ENCODE measurements at regions of chr16 and their contacts with region 1.

Region 1: GRCh38 chr16:11255737-11256660 is at the start of gene SOCS1:
- DNase-seq: peak; percentile 77 to 88 (median 88)
- H3K4me3 ChIP-seq: peak within 1 kb of the TSS; percentile 68 to 92 (median 85)
- H3K27ac ChIP-seq: peak within 1 kb of the TSS; percentile 68 to 82
- H3K4me1 ChIP-seq: peaks cover 5 to 62% (median 53%) of the 10 kb centered on the region in 4 experiments
- H3K27me3 ChIP-seq: no peaks in the 10 kb centered on the region

Region 2: DNA sequence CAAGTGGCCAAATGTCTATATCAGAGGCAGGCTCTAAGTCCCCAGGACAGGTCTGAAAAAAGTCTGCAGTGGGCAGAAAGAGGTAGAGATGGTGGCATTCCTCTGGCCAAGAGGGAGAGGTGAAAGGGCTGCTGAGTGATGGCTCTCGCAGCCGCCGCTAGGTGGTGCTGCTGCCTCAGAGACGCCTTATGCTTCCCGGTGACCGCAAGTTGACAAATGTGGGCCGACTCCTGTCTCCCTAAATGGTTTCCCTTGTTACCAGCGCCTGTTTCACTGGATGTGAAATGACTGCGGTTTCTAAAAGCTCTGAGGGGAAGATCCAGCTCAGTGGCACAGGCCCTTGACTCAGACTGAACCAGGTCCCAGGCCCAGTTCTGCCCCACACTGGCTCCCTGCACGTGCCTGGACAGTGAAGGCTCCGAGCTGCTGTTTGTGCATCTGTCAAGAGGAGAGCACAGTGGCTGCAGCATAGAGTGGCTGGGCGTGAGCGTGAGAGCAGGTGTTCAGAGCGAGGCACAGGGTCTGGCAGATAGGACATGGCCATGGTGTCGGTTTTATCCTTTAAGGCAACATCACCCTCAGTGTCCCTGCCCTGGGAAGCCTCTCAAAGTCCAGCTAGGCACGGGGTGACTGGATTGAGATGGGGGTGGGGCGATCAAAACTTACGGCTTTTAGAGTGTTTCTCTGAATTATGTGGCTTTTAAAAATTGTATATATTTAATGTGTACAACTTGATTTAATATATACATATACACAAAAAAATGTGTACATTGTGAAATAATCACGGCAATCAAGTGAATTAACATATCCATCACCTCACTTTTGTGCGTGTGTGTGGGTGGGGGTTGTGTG is 291.7 kb before region 1 on chr16:
- CTCF ChIA-PET with region 1: interaction called, 80 read pairs
- POLR2A ChIA-PET with region 1: interaction called, 14 read pairs
- DNase-seq: peak; percentile 79 to 91 (median 89)
- H3K4me3 ChIP-seq: peak overlapping the region in 1 of 7 experiments; percentile 22
- H3K27ac ChIP-seq: no peak overlapping the region
- H3K4me1 ChIP-seq: peaks cover 2 to 35% (median 16%) of the 10 kb centered on the region in 4 experiments
- H3K27me3 ChIP-seq: no peaks in the 10 kb centered on the region

Region 3: DNA sequence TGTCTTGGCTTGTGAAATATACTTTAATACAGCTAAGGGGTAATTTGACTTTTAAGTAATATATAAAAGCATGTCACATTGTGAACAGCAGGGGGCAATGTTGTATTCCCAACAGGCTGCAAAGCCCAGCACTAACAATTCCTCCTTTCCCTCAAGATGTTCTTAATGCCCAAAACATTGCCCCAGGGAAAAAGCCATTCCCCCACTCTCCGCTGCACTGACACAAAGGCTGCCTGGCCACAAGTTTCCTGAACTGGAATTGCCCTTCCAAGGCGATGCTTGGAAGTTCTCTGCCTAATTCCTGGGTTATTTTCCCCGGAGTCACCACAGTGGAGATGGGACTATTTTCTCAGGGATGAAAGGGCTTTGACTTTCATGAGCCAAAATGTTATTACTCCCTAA is 284.4 kb before region 1 on chr16:
- CTCF ChIA-PET with region 1: interaction called, 80 read pairs
- POLR2A ChIA-PET with region 1: interaction called, 5 read pairs
- DNase-seq: peak; percentile 70 to 78 (median 71)
- H3K4me3 ChIP-seq: no peak overlapping the region
- H3K27ac ChIP-seq: no peak overlapping the region
- H3K4me1 ChIP-seq: peaks cover 3 to 28% (median 19%) of the 10 kb centered on the region in 4 experiments
- H3K27me3 ChIP-seq: no peaks in the 10 kb centered on the region

Region 4: DNA sequence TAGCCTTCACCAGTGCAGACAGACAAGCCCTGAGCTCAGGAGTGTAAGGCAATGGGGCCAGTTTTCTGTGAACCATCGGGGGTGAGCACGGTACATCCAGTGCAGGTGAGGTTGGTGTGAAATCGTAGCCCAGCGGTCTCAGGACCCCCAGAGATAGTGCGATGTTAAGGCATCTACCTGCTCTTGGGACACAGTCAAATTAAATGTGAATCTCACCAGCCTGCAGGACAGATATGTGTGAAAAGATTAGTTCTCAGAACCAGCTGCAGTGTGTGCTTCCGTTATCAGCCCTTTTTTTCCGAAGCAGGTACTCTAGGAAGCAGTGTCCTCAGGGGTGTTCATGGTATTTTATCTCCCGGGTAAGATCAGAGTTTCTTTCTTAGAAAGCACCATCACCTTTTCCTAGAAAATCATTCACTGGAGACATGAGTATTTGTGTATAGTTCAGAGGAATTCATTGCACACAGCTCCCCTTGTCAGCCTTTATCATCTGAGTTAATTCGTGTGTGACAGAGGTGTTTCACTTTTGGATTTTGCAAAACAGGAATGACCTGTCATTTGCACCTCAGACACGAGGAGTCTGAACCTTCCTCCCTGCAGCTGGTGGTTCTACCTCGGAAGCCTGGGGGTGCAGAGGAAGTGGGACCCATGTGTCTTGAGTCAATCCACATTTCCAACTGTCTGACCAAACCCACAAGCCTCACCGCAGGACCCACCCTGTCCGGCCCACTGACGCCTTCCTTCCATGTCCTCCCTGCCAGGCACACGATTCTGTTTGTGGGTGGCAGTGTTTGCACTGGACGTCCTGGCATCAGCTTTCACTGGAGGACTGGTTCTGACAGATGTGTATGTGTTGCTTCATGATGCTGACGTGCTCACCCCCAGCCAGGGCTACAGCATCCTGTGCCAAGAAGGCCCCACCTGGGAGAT is 203.9 kb before region 1 on chr16:
- CTCF ChIA-PET with region 1: interaction called, 7 read pairs
- POLR2A ChIA-PET with region 1: interaction called, 10 read pairs
- DNase-seq: peak; percentile 79 to 99 (median 98)
- H3K4me3 ChIP-seq: peak overlapping the region in 4 of 7 experiments; percentile 20 to 52 (median 44)
- H3K27ac ChIP-seq: no peak overlapping the region
- H3K4me1 ChIP-seq: peaks cover 11 to 56% (median 41%) of the 10 kb centered on the region in 4 experiments
- H3K27me3 ChIP-seq: peaks cover 0 to 16% (median 3%) of the 10 kb centered on the region in 5 experiments

Region 5: GRCh38 chr16:11273721-11274324 is 17.8 kb after region 1 on chr16:
- CTCF ChIA-PET with region 1: interaction called, 39 read pairs
- POLR2A ChIA-PET with region 1: interaction called, 4 read pairs
- DNase-seq: no peak
- H3K4me3 ChIP-seq: no peak overlapping the region
- H3K27ac ChIP-seq: no peak overlapping the region
- H3K4me1 ChIP-seq: peaks cover 0 to 2% (median 1%) of the 10 kb centered on the region in 4 experiments
- H3K27me3 ChIP-seq: no peaks in the 10 kb centered on the region

Region 6: DNA sequence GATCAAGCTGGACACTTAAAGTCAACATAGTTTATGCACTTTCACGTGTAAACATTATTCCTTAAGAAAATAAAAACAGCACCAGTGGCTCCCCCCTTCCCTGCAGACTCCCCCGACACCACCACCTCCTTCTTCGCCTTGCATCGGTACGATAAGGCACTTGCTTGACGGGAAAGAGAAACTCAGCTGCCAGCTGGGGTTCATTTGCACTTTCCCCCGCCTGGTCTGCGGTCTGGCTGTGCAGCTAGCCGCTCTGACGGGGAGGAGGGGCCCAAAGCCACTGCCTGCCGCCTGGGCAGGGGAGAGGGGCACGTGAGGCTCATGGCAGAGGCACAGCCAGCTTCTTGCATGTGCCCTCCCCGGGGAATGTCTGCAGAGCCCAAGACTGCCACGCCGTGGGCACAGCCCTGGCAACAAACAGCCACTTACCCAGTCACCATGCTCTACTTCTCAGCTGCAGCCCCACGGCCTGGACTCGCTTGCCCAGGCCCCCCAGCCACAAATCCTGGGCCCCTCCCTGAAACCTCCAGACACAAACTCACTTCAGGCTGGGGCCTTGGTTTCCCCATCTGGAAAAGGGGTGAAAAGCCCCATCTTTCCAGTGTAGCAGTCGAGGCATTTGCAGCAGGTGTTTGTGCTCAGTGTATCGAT is 41.6 kb after region 1 on chr16:
- CTCF ChIA-PET with region 1: interaction called, 9 read pairs
- POLR2A ChIA-PET with region 1: interaction called, 11 read pairs
- DNase-seq: peak; percentile 96 to 99 (median 98)
- H3K4me3 ChIP-seq: peak overlapping the region in 4 of 7 experiments; percentile 8 to 49 (median 24)
- H3K27ac ChIP-seq: no peak overlapping the region
- H3K4me1 ChIP-seq: peaks cover 5 to 36% (median 30%) of the 10 kb centered on the region in 4 experiments
- H3K27me3 ChIP-seq: no peaks in the 10 kb centered on the region

Region 7: DNA sequence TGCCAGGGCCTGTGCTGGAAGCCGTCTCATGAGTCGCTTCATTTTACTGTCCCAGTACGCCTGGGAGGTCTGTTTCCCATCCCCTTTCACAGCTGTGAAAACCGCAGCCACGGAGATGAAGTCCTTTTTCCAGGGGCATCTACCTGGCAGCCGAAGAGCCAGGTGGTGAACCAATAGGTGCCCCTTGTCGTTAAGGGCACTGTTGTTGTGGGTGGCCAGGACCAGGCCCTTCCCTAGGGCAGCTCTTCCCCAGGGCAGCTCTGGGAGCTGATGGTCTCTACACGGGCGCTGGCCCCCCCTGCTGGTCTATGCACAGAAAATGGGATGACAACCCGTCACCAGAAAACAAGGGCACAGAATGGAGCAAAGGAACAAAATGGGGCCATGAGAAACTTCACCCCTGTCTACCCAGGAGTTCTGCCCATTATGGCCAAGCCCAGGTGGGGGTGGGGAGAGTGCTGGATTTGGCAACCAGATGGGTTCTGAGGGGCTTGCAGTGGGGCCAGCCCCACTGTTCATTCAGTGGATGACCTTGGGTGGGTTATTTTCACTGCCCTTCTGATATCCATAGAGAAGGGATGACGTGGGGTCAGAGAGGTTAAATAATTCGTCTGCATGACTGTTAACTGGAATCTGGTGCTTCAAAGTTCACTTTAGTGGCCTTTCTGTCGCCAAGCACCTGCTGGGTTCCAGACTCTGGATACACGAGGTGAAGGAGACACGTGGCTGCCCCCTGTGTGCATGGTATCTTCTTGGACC is 100.8 kb after region 1 on chr16:
- CTCF ChIA-PET with region 1: interaction called, 76 read pairs
- POLR2A ChIA-PET with region 1: interaction called, 5 read pairs
- DNase-seq: peak; percentile 44 to 46 (median 45)
- H3K4me3 ChIP-seq: no peak overlapping the region
- H3K27ac ChIP-seq: no peak overlapping the region
- H3K4me1 ChIP-seq: peaks cover 14 to 40% (median 33%) of the 10 kb centered on the region in 4 experiments
- H3K27me3 ChIP-seq: peaks cover 0 to 42% (median 25%) of the 10 kb centered on the region in 5 experiments